ENCODE measurements at regions of chr2 and their contacts with region 1.

Region 1: DNA sequence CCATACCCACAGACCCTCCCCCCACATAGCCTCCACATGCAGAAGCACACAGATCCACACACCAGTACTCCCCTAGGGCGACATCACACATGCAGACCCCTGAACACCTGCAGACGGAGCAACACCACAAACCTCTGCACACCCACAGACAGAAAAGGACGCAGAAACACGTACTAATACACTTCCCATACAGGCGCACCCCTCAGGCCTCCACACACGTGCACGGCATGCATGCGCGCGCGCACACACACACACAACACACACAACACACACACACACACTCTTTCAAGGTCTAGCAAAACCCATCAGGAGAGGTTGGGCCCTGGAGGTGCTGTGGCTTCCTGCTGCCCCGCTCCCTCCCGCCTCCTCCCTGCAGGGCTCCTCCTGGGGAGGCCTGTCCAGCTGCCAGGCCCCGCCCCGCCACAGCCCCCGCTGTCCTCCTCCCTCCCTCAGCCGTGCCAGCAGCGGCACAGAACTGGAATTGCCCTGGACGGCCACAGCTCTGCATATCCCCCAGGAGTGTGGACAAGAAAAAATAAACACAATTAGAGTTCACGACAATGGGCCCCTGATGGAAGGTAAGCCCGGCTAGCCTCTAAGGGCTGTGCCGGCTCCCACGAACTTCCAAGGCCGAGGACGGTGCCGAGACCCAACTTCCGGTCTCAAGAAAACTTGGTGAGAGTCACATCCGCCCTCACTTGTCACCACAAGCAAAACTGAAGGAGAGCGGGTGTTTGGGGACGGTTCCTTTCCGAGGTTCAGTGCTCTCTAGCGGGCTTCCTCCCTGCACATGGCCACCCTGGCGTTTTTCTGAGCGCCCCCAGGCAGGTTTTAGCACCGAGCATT is 6.8 kb downstream of the ZFP36L2 start:
- DNase-seq: peak; percentile 89
- ATAC-seq: peak; percentile 78

Region 2: DNA sequence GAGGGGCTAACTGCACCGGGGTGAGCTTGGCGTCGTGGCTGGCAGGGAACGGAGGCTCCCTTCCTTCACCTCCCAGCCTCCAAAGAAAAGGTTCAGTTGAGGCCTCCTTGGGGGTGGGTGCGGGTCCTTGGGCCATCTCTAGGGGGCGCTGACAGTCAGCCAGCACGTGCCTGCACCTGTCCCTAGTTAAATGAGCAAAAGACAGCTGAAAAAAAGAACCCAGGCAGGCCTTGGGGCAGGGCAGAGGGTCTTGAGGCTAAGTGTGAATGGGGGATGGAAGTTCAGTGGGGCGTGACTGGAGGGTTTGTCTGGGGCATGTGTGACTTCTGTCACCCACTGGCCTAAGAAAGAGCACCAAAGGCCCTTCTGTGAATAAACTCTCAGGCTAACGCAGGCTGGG is 49.6 kb before region 1 on chr2:
- intact Hi-C with region 1: loop called (anchors 10 kb)
- DNase-seq: no peak
- ATAC-seq: no peak

Region 3: DNA sequence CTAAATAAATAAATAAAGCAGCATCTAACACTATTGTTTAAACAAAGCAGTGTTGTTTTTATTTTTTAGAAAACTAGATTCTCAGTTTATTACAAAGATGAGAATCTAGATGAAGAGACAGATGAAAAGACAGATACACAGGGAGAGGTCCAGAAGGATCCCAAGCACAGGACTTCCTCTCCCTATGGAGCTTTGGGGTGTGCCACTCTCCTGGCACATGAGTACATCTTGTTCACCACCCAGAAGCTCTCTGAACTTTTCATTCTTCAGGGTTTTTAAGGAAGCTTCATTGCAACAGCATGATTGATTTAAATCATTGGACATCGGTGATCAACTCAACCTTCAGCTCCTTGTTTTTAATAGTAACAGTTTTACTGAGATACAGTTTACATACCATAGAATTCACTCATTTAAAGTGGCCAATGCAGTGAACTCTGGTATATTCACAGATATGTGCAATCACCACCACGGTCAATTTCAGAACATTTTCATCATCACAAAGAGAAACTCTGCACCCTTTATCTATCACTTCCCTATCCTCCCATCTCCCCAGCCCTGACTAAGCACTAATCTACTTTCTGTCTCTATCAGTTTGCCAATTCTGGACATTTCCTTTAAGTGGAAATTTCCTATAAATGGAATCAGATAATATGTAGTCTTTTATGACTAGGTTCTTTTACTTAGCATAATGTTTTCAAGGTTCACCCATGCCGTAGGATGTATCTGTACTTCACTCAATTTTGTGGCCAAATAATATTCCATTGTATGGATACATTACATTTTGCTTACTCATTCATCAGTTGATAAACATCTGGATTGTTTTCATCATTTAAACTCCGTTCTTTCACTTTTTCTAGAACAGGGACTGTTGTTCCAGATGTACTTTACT is 69.1 kb after region 1 on chr2:
- intact Hi-C with region 1: no loop called
- DNase-seq: no peak
- ATAC-seq: no peak

Measured in sciatic nerve (tissue), 2 donors.